ENCODE measurements at regions of chr14 and their contacts with region 1.

Region 1: GRCh38 chr14:49852301-49853157 is at the start of gene NEMF:
- DNase-seq: peak; percentile 57 to 89 (median 78)
- ATAC-seq: peak; percentile 80 to 84
- H3K4me3 Mint-ChIP-seq: peak within 1 kb of the TSS; percentile 91 to 100 (median 96)
- H3K27ac Mint-ChIP-seq: peak within 1 kb of the TSS; percentile 93 to 99 (median 96)
- H3K4me1 Mint-ChIP-seq: peaks cover 20 to 48% (median 46%) of the 10 kb centered on the region in 4 donors
- H3K27me3 Mint-ChIP-seq: no peaks in the 10 kb centered on the region
- polyA plus RNA-seq, gene NEMF: 39.6 to 46.1 (median 43.5) TPM

Region 2: DNA sequence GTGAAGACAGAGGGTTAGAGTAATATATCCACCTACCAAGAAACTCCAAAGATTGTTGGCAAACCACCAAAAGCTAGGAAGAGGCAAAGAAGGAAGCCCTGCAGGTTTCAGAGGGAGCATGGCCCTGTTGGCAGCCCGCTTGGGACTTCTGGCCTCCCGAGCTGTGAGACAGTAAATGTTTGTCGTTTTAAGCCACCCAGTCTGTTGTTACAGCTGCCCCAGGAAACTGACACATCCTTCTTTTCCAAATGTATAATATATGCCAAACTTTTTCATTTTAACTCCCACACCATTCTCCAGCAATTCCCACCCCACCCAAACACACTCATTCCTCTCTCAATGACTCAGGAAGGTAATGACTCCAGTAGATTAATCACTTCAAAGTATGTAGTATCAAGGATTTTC is 340.4 kb before region 1 on chr14:
- POLR2A ChIA-PET with region 1: no interaction called
- DNase-seq: no peak
- ATAC-seq: no peak
- H3K4me3 Mint-ChIP-seq: no peak overlapping the region
- H3K27ac Mint-ChIP-seq: no peak overlapping the region
- H3K4me1 Mint-ChIP-seq: no peaks in the 10 kb centered on the region
- H3K27me3 Mint-ChIP-seq: peaks cover 0 to 1% (median 0%) of the 10 kb centered on the region in 5 donors

Region 3: GRCh38 chr14:49808780-49809179 is 43.7 kb before region 1 on chr14:
- POLR2A ChIA-PET with region 1: no interaction called
- DNase-seq: no peak
- ATAC-seq: no peak
- H3K4me3 Mint-ChIP-seq: no peak overlapping the region
- H3K27ac Mint-ChIP-seq: peak overlapping the region in 5 of 10 donors; percentile 11 to 58 (median 40)
- H3K4me1 Mint-ChIP-seq: peaks cover 5 to 9% (median 6%) of the 10 kb centered on the region in 4 donors
- H3K27me3 Mint-ChIP-seq: no peaks in the 10 kb centered on the region

Region 4: DNA sequence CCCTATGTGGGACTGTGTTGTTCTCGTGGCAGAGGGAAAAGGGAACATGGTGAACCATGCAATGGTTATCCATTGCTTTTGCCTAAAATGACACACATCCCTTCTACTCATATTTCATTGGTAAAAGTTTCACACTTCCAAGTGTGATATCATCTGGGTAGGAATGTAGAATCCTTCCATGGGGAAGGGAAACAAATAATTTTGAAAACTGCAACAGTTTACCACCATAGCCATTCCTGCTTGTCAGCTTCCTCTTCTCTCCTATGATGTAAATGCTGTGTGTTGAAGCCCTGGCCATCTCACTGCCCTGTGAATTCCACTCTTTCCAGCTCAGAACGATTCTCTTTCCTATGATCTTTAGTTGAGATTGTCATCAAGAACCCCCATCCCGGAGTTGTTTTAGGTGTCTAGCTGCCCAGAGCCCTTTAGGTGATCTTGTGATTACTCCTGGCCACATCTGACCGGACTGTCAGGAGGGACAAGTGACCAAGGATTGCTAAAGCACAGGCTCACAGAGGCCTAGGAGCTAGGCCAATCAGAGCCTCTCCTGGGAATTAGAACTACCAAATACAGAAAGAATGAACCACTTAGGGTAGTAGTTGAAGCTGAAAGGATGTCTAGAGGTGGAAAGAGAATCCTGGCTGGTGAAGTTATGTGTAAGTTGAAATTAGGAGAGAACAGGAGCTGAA is 179.2 kb after region 1 on chr14:
- POLR2A ChIA-PET with region 1: no interaction called
- DNase-seq: no peak
- ATAC-seq: no peak
- H3K4me3 Mint-ChIP-seq: no peak overlapping the region
- H3K27ac Mint-ChIP-seq: peak overlapping the region in 3 of 10 donors; percentile 0 to 85 (median 40)
- H3K4me1 Mint-ChIP-seq: peaks cover 16 to 27% (median 20%) of the 10 kb centered on the region in 4 donors
- H3K27me3 Mint-ChIP-seq: no peaks in the 10 kb centered on the region

Region 5: DNA sequence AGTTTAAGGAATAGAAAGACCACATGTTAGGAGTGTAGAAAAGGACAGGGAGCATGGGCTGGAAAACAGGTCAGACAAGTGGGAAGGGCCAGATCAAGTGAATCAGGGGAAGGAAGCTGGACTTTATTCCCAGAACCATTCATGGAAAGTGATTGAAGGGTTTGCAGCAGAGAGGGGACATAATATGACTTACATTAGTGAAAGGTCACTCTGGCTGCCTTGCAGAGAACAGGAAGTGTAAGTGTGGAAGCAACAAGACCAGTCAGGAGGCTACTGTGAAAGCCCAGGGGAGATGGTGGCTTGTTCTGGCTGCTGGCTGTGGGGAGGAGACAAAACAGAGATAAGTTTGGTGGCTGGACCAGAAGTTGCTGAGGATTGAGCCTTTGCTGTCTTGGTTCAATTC is 194.7 kb after region 1 on chr14:
- POLR2A ChIA-PET with region 1: no interaction called
- DNase-seq: no peak
- ATAC-seq: no peak
- H3K4me3 Mint-ChIP-seq: peak overlapping the region in 1 of 10 donors; percentile 54
- H3K27ac Mint-ChIP-seq: peak overlapping the region; percentile 35 to 98 (median 88)
- H3K4me1 Mint-ChIP-seq: peaks cover 43 to 64% (median 59%) of the 10 kb centered on the region in 4 donors
- H3K27me3 Mint-ChIP-seq: no peaks in the 10 kb centered on the region

Region 6: DNA sequence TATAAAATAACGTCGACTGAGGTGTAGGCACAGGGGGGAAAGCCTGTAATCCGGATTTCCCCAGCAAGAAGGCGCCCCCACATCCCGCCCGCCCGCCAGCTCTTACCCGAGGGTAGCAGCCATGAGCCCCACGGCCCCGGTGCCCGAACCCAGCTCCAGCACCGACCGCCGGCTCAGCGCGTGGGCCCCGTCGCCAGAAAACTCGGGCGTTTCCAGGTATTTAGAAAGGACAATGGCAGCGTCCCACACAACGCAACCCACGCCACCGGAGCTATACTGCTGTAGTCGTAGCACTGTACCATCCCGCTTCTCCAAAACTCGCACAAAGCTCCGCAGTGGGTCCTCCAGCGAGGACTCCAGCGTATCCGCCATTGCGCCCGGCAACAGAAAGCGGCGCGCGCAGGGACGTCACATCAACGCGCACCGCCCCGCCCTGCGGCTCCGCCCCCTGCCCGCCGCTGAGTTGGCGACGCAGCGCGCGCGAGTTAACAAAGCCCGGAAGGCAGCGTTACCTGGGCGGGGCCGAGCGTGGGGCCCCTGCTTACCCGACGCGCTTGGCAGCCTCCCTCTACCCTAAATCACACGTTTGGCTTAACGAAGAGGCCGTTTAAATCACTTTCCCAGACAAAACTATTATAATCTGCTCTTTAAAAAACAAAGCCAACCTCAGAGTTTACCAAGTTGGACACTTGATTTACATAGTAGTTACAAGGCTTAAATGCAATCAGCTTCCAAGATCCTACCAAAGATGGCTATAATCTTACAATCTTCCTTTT is 263.8 kb after region 1 on chr14 and contains the start of gene VCPKMT:
- POLR2A ChIA-PET with region 1: interaction called, 24 read pairs
- DNase-seq: peak; percentile 90 to 98 (median 96)
- ATAC-seq: peak; percentile 95 to 96
- H3K4me3 Mint-ChIP-seq: peak within 1 kb of the TSS; percentile 91 to 99 (median 97)
- H3K27ac Mint-ChIP-seq: peak within 1 kb of the TSS; percentile 96 to 99 (median 99)
- H3K4me1 Mint-ChIP-seq: peaks cover 6 to 41% (median 24%) of the 10 kb centered on the region in 4 donors
- H3K27me3 Mint-ChIP-seq: no peaks in the 10 kb centered on the region
- polyA plus RNA-seq, gene VCPKMT: 8.8 to 10.4 (median 9.5) TPM

Measured in naive thymus-derived CD8-positive, alpha-beta T cell (primary cell).